Right ventricle myocardium inferior (tissue), 1 donor: ENCODE measurements at regions of chr11 and their contacts with region 1.

Region 1: GRCh38 chr11:47373876-47374720 is 4.2 kb downstream of the SPI1 start:
- DNase-seq: peak; percentile 93
- ATAC-seq: peak; percentile 80

Region 2: DNA sequence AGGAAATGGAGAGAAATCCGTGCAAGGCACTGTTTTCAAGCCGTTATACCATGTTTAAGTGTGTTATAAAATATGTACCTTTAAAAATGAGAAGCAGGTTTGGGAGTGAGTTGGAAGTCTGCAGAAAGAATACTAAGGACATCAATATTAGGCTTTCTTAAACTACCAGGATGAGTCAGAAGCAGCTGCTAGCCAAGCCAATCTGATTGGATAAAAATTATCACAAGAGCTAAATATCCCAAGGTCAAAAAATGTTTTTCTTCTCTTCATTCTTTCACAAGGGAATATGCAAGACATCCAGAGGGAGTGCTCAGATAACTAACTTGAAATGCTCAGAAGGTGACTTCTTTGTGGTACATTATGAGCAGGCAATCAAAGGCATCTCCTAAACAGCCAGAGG is 508.8 kb before region 1 on chr11:
- intact Hi-C with region 1: no loop called
- DNase-seq: no peak
- ATAC-seq: no peak

Region 3: DNA sequence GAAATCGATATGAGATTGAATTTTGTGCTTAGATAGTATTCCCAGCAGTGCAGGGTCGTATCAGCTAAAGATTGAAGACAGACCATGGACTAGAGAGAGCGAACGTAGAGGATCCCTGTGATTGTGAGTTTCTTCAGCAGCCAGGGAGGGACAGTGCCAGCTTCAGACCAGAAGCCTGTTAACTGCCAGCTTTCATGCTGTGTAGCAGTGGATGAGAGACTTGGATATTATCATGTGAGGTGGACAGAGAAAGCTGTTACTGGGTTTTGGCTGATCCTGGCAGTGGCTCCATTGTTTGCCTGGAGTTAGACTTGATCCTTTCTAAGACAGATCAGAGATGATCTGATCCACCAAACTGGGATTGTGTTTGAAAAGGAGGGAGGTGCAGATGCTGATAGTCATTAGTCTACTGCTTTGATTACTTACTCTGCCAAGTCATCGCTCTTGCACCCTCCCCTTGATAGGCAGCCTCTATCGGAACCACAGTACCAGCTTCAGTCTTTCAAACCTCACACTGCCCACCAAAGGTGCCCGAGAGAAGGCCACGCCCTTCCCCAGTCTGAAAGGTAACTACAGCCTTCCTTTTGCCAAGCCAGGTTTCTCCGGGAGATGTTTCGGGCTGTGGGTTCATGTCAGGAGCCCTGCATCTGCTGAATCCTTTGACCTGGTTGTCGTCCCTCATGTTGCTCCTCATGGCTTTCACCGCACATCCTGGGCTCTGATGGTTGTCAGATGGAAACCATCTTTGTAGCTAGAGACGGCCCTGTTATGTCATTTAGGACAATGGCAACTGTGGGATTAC is 87.9 kb before region 1 on chr11:
- intact Hi-C with region 1: no loop called
- DNase-seq: no peak
- ATAC-seq: peak; percentile 32

Region 4: GRCh38 chr11:47407746-47408590 is 33.9 kb after region 1 on chr11 and contains the start of gene SLC39A13:
- intact Hi-C with region 1: loop called (anchors 2 kb)
- DNase-seq: peak; percentile 97
- ATAC-seq: peak; percentile 94
- total RNA-seq, gene SLC39A13: 35.0 TPM

Region 5: GRCh38 chr11:47433991-47434786 is 60.1 kb after region 1 on chr11:
- intact Hi-C with region 1: no loop called
- DNase-seq: no peak
- ATAC-seq: no peak

Region 6: GRCh38 chr11:47454180-47454644 is 80.1 kb after region 1 on chr11:
- intact Hi-C with region 1: loop called (anchors 2 kb)
- DNase-seq: peak; percentile 80
- ATAC-seq: peak; percentile 89

Region 7: GRCh38 chr11:47499614-47500013 is 125.5 kb after region 1 on chr11:
- intact Hi-C with region 1: no loop called
- DNase-seq: no peak
- ATAC-seq: peak; percentile 68

Region 8: GRCh38 chr11:47552566-47553416 is 178.7 kb after region 1 on chr11 and contains the start of gene CELF1:
- intact Hi-C with region 1: loop called (anchors 10 kb)
- DNase-seq: peak; percentile 96
- ATAC-seq: peak; percentile 99
- total RNA-seq, gene CELF1: 96.2 TPM

Region 9: DNA sequence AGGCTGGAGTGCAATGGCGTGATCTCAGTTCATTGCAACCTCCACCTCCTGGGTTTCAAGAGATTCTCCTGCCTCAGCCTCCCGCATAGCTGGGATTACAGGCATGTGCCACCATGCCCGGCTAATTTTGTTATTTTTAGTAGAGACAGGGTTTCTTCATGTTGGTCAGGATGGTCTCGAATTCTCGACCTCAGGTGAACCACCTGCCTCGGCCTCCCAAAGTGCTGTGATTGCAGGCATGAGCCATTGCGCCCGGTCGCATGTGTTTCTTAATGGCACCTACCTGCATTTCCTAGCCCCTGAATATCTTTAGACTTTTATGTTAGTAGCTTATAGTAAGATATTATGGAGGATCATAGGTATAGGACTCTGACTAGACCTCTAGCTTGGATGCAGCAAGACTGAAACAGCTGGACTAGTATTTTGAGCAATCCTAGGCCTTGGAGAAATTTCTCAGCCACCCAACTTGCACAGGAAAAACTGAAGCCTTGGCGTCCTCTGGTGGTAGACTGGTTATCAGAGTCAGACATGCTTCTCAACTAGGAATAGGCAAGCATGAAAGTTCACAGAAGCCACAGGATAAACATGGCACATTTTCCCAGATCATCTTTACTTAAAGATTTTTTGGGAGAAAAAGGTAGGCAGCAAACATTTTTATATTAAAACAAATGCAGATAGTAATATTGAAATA is 242.8 kb after region 1 on chr11:
- intact Hi-C with region 1: loop called (anchors 10 kb)
- DNase-seq: no peak
- ATAC-seq: peak; percentile 80